ENCODE measurements at regions of chr9 and their contacts with region 1.

Region 1: DNA sequence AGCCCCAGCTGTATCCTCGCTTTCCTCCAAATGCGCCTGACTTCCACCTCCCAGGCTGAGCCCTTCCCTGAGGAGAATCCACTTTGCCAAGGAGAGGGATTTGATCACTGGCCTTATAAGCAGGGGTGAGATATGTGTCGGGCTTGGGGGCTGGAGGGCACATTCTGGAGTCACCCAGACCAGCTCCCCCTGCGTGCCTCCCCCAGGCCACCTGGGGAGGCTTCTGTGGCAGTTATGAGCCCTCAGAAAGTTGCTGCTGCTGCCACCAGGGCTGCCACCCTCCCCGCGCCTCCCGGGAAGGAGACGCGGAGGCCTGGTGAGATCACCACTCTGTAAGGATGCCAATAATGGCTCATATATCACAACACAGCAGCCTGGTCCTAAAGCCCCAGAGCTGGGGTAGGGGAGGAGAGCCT is 211.5 kb downstream of the PAPPA start:
- DNase-seq: peak; percentile 78 to 81 (median 79)
- H3K4me3 ChIP-seq: no peak overlapping the region
- H3K27ac ChIP-seq: peak overlapping the region; percentile 58 to 87
- H3K4me1 ChIP-seq: peaks cover 2% of the 10 kb centered on the region
- H3K27me3 ChIP-seq: no peaks in the 10 kb centered on the region
- CTCF ChIP-seq: peak in 1 of 3 donors; percentile 35
- EP300 ChIP-seq: no peak
- POLR2A ChIP-seq: peak; percentile 33

Region 2: GRCh38 chr9:116149844-116150243 is 215.2 kb before region 1 on chr9:
- intact Hi-C with region 1: loop called in 1 of 4 experiments (anchors 10 kb)
- DNase-seq: peak in 2 of 5 donors; percentile 37 to 38
- H3K4me3 ChIP-seq: no peak overlapping the region
- H3K27ac ChIP-seq: no peak overlapping the region
- H3K4me1 ChIP-seq: peaks cover 5% of the 10 kb centered on the region
- H3K27me3 ChIP-seq: no peaks in the 10 kb centered on the region
- CTCF ChIP-seq: peak in 2 of 3 donors; percentile 19 to 48
- EP300 ChIP-seq: no peak
- POLR2A ChIP-seq: no peak

Region 3: DNA sequence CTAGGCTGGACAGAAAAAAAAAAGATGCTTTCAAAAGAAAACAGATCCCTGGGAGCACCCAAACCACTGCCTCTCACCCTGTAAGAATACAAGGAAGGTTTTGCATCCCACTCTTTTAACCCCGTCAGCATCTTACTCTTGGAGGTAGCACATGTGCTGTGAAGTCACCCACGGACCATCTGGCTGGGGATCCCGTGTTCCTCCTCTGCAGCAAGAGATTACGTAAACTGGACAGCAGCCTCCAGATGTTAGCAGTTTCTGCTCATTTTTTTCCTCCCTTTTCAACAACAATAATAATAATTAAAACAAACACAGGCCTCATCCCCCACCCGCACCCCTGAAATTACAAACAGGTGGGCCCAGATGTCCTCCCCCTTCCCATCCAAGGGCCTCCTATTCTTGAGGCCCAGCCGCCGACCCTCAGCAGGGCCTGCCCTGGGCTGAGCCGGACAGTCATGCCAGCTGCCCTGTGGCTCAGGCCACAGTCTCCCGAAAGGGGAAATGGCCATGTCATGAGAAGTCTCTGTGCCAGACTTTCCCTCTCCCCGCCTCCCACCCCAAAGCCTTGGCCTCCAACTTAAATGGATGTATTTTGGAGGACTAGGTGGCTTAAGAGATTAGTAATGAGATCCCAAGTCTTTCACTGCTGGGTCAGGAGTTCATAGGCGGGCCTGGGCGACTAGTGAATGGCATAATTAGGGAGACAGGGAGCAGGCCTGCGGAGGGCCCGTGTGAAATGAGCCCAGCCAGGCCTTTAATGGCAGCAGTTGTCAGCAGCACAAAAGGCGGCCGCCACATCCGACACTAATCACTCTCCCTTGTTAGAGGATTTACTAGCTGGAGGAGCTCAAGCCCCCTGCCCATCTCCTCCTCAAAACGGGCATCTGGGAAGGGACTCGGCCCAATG is 46.3 kb before region 1 on chr9:
- intact Hi-C with region 1: loop called in 1 of 4 experiments (anchors 10 kb)
- DNase-seq: peak; percentile 56 to 78 (median 71)
- H3K4me3 ChIP-seq: no peak overlapping the region
- H3K27ac ChIP-seq: peak overlapping the region; percentile 16 to 41
- H3K4me1 ChIP-seq: peaks cover 4% of the 10 kb centered on the region
- H3K27me3 ChIP-seq: no peaks in the 10 kb centered on the region
- CTCF ChIP-seq: no peak
- EP300 ChIP-seq: no peak
- POLR2A ChIP-seq: no peak

Region 4: DNA sequence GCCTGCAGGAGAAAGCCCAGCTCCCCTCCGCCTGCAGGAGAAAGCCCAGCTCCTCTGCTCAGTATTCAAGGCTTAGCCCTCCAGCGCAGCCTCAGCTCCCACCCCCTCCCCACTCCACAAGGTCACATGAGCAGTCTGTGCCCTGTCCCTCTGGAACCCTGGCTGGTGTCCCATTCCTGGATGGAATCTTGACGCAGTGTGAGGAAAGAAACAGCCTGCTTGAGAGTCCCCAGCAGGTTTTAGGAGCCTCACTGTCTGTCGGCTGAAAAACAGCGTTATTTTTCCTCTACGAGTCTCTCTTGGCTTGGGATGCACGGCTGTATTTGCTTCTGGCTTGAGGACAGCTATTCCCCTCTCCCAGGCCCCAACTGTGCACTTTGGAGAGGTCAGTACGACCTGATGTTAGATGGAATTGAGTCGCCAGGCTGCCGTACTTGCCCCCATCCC is 111.9 kb after region 1 on chr9:
- intact Hi-C with region 1: loop called in 1 of 4 experiments (anchors 2 kb)
- DNase-seq: peak; percentile 58 to 75 (median 61)
- H3K4me3 ChIP-seq: no peak overlapping the region
- H3K27ac ChIP-seq: peak overlapping the region in 1 of 2 donors; percentile 67
- H3K4me1 ChIP-seq: peaks cover 9% of the 10 kb centered on the region
- H3K27me3 ChIP-seq: no peaks in the 10 kb centered on the region
- CTCF ChIP-seq: no peak
- EP300 ChIP-seq: no peak
- POLR2A ChIP-seq: no peak